Natural killer cell (primary cell): ENCODE measurements at regions of chr16 and their contacts with region 1.

Region 1: GRCh38 chr16:30472328-30472942 is at the start of gene ITGAL:
- DNase-seq: peak; percentile 77 to 93
- ATAC-seq: peak; percentile 75 to 90 (median 86)
- H3K4me3 ChIP-seq: peak within 1 kb of the TSS; percentile 53
- H3K4me3 Mint-ChIP-seq: peak within 1 kb of the TSS; percentile 98
- H3K27ac ChIP-seq: peak within 1 kb of the TSS; percentile 88
- H3K27ac Mint-ChIP-seq: peak within 1 kb of the TSS; percentile 95 to 96
- H3K4me1 ChIP-seq: peaks cover 79% of the 10 kb centered on the region
- H3K4me1 Mint-ChIP-seq: peaks cover 54 to 64% of the 10 kb centered on the region in 2 donors
- H3K27me3 ChIP-seq: no peaks in the 10 kb centered on the region
- H3K27me3 Mint-ChIP-seq: no peaks in the 10 kb centered on the region
- CTCF ChIP-seq: no peak
- total RNA-seq, gene ITGAL: 1,131 to 1,260 (median 1,176) TPM

Region 2: DNA sequence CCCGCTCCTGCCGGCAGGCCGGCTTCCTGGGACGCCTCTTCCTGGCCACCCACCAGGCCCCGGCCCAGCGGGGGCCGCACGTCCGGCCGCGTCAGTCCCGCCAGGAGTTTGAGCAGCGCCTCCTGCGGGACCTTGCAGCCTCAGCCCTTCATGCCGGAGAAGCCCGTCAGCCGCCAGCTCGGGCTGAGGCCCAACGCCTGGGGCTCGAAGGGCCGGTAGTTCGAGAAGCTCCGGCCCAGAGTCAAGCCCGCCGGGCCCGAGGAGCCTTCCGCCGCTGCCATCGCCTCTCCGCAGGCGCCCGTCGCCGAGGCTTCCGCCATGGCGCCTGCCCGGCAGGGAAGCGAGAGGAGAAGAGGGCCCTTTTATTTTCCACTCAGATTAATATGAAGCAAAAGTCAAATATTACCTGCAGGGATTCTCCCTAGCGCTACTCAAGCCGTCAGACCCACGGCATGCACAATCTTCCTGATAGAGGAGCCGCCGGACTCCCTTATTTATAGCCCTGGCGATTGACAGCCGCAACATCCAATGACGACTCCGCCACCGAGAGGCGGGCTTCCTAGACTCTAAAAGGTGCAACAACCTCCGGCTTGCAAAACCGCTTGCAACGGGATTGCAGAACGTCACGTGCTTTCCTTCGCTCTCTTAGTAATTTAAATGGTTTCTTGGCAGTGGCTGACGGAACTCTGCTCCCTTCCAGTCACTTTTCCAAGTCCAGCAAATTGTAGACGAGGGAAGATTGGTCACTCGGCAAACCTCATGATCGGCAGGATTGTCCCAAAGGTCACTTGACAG is 26.8 kb before region 1 on chr16 and contains the start of gene SEPHS2:
- intact Hi-C with region 1: loop called (anchors 1 kb)
- DNase-seq: peak; percentile 94 to 97
- ATAC-seq: peak; percentile 86 to 91 (median 90)
- H3K4me3 ChIP-seq: peak within 1 kb of the TSS; percentile 87
- H3K4me3 Mint-ChIP-seq: peak within 1 kb of the TSS; percentile 96
- H3K27ac ChIP-seq: peak within 1 kb of the TSS; percentile 91
- H3K27ac Mint-ChIP-seq: peak within 1 kb of the TSS; percentile 94 to 95
- H3K4me1 ChIP-seq: peaks cover 44% of the 10 kb centered on the region
- H3K4me1 Mint-ChIP-seq: peaks cover 36 to 38% of the 10 kb centered on the region in 2 donors
- H3K27me3 ChIP-seq: no peaks in the 10 kb centered on the region
- H3K27me3 Mint-ChIP-seq: no peaks in the 10 kb centered on the region
- CTCF ChIP-seq: peak; percentile 34
- total RNA-seq, gene SEPHS2: 25.5 to 37.6 (median 35.0) TPM

Region 3: DNA sequence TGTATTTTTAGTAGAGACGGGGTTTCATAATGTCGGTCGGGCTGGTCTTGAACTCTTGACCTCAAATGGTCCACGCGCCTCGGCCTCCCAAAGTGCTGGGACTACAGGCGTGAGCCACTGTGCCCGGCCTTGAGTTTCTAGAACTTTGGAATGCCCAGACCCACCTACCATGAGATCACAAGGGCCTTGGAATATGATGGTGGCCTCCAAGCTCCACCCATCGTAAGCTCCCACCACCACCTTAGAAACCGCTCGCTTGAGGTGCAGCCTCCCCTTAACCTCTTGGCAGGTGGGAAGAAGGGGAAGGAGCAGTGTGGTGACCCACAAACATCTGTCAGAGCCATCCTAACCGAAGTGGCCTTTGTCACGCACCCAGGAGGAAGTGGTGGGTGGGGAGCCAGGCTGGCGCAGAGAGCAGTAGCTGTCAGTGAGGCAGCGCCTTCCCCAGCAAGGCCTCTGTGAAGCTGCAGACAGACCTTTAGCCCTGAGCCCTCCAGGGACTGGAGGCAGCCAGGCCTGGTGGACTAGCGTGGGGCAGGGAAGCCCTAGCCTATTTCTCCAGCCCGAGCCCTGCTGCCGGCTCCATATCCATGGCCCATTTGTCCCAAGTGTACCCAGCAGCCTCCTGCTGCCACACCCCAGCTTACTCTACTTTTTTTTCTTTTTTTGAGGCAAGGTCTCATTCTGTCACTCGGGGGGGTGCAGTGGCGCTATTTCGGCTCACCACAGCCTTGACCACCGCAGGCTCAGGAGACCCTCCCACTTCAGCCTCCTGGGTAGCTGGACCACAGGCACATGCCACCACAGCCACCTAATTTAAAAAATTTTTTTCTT is 13.7 kb before region 1 on chr16:
- intact Hi-C with region 1: loop called (anchors 1 kb)
- DNase-seq: peak; percentile 71 to 92
- ATAC-seq: peak; percentile 90 to 94 (median 91)
- H3K4me3 ChIP-seq: no peak overlapping the region
- H3K4me3 Mint-ChIP-seq: peak overlapping the region; percentile 49
- H3K27ac ChIP-seq: peak overlapping the region; percentile 73
- H3K27ac Mint-ChIP-seq: peak overlapping the region; percentile 85
- H3K4me1 ChIP-seq: peaks cover 40% of the 10 kb centered on the region
- H3K4me1 Mint-ChIP-seq: peaks cover 34 to 50% of the 10 kb centered on the region in 2 donors
- H3K27me3 ChIP-seq: no peaks in the 10 kb centered on the region
- H3K27me3 Mint-ChIP-seq: no peaks in the 10 kb centered on the region
- CTCF ChIP-seq: no peak

Region 4: DNA sequence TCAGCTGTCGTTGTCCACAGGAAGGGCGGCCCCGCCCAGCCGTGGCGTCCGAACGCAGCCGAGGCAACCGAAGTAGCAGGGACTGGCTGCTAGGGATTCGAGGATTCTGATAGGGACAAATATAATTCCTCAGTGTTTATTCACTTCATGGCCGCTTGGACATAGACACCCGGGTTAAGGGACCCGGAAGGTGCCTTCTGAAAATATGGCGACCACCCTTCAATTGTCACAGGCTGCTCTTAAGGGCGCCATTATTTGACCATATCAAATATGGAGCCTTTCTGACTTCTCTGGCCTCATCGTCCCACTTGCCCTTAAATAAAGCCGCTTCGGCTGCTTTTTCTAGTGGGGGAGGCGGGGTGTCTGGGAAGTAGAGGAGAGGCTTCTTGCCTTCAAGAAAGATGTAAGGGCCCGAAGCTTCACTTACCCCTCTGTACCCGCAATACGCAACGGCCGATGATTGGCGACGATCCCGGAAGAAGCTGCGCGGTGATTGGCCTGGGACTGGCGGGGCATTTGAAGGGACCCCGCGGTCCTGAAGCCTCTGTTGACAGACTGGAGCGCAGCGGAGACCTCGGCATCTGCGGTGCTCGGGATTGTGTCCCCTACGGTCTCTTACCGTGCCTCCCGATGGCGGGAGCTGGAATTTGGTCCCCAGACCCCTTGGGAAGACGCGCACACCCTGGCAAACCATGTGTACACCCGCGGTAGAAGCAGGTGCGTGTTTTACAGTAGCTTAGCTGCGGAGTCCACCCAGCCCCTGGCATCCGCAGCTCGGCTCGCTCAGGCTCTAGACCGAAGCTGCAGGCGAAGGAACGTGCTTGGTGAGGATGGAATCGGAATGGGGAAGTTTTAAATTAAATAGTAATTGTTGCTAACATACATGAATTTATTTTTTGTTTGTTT is 99.5 kb after region 1 on chr16 and contains the start of gene ZNF688:
- intact Hi-C with region 1: no loop called
- DNase-seq: peak; percentile 91 to 97
- ATAC-seq: peak; percentile 82 to 93 (median 86)
- H3K4me3 ChIP-seq: peak within 1 kb of the TSS; percentile 74
- H3K4me3 Mint-ChIP-seq: peak within 1 kb of the TSS; percentile 93
- H3K27ac ChIP-seq: peak within 1 kb of the TSS; percentile 97
- H3K27ac Mint-ChIP-seq: peak within 1 kb of the TSS; percentile 92 to 95
- H3K4me1 ChIP-seq: peaks cover 42% of the 10 kb centered on the region
- H3K4me1 Mint-ChIP-seq: peaks cover 19 to 29% of the 10 kb centered on the region in 2 donors
- H3K27me3 ChIP-seq: no peaks in the 10 kb centered on the region
- H3K27me3 Mint-ChIP-seq: no peaks in the 10 kb centered on the region
- CTCF ChIP-seq: no peak
- total RNA-seq, gene ZNF688: 10.1 to 16.9 (median 16.5) TPM

Region 5: GRCh38 chr16:30650369-30651123 is 178.1 kb after region 1 on chr16 and contains the start of gene PRR14:
- intact Hi-C with region 1: loop called (anchors 2 kb)
- DNase-seq: peak; percentile 96 to 99
- ATAC-seq: peak; percentile 82 to 95 (median 85)
- H3K4me3 ChIP-seq: peak within 1 kb of the TSS; percentile 94
- H3K4me3 Mint-ChIP-seq: peak within 1 kb of the TSS; percentile 100
- H3K27ac ChIP-seq: peak within 1 kb of the TSS; percentile 96
- H3K27ac Mint-ChIP-seq: peak within 1 kb of the TSS; percentile 95 to 100
- H3K4me1 ChIP-seq: peaks cover 31% of the 10 kb centered on the region
- H3K4me1 Mint-ChIP-seq: peaks cover 31 to 37% of the 10 kb centered on the region in 2 donors
- H3K27me3 ChIP-seq: no peaks in the 10 kb centered on the region
- H3K27me3 Mint-ChIP-seq: no peaks in the 10 kb centered on the region
- CTCF ChIP-seq: no peak
- total RNA-seq, gene PRR14: 81.0 to 110 (median 101) TPM

Region 6: GRCh38 chr16:30948667-30949649 is 476.5 kb after region 1 on chr16 and contains the start of gene ORAI3:
- intact Hi-C with region 1: no loop called
- DNase-seq: peak in 1 of 2 donors; percentile 62
- ATAC-seq: peak; percentile 63 to 77 (median 67)
- H3K4me3 ChIP-seq: peak within 1 kb of the TSS; percentile 74
- H3K4me3 Mint-ChIP-seq: peak within 1 kb of the TSS; percentile 92
- H3K27ac ChIP-seq: peak within 1 kb of the TSS; percentile 71
- H3K27ac Mint-ChIP-seq: peak within 1 kb of the TSS; percentile 60 to 88
- H3K4me1 ChIP-seq: peaks cover 30% of the 10 kb centered on the region
- H3K4me1 Mint-ChIP-seq: peaks cover 10 to 34% of the 10 kb centered on the region in 2 donors
- H3K27me3 ChIP-seq: no peaks in the 10 kb centered on the region
- H3K27me3 Mint-ChIP-seq: no peaks in the 10 kb centered on the region
- CTCF ChIP-seq: no peak
- total RNA-seq, gene ORAI3: 10.8 to 19.8 (median 12.8) TPM